Gastrocnemius medialis (tissue), 4 donors: ENCODE measurements at regions of chr14 and their contacts with region 1.

Region 1: GRCh38 chr14:54805521-54806322 is 96.9 kb downstream of the GCH1 start:
- DNase-seq: peak; percentile 59 to 79
- ATAC-seq: peak; percentile 92
- H3K4me3 ChIP-seq: peak overlapping the region in 1 of 4 donors; percentile 17
- H3K27ac ChIP-seq: no peak overlapping the region
- H3K4me1 ChIP-seq: peaks cover 0 to 5% of the 10 kb centered on the region in 2 donors
- H3K27me3 ChIP-seq: no peaks in the 10 kb centered on the region
- CTCF ChIP-seq: peak; percentile 89 to 97 (median 92)
- POLR2A ChIP-seq: no peak

Region 2: GRCh38 chr14:54782751-54783679 is 22.7 kb before region 1 on chr14:
- in situ Hi-C with region 1: no loop called
- intact Hi-C with region 1: loop called (anchors 1 kb)
- DNase-seq: no peak
- ATAC-seq: no peak
- H3K4me3 ChIP-seq: no peak overlapping the region
- H3K27ac ChIP-seq: peak overlapping the region; percentile 98 to 100 (median 99)
- H3K4me1 ChIP-seq: peaks cover 50% of the 10 kb centered on the region in 2 donors
- H3K27me3 ChIP-seq: no peaks in the 10 kb centered on the region
- CTCF ChIP-seq: no peak
- POLR2A ChIP-seq: no peak

Region 3: GRCh38 chr14:54794159-54794558 is 11.6 kb before region 1 on chr14:
- in situ Hi-C with region 1: no loop called
- intact Hi-C with region 1: no loop called
- DNase-seq: no peak
- ATAC-seq: no peak
- H3K4me3 ChIP-seq: no peak overlapping the region
- H3K27ac ChIP-seq: no peak overlapping the region
- H3K4me1 ChIP-seq: no peaks in the 10 kb centered on the region
- H3K27me3 ChIP-seq: no peaks in the 10 kb centered on the region
- CTCF ChIP-seq: no peak
- POLR2A ChIP-seq: no peak